Activated CD4-positive, alpha-beta T cell treated with anti-CD3 and anti-CD28 coated beads for 36 hours (primary cell): ENCODE measurements at regions of chr4 and their contacts with region 1.

Region 1: GRCh38 chr4:69838977-69839376 is 21.0 kb downstream of the SULT1E1 start:
- DNase-seq: no peak
- ATAC-seq: no peak
- H3K4me3 Mint-ChIP-seq: no peak overlapping the region
- H3K27ac Mint-ChIP-seq: no peak overlapping the region
- H3K4me1 Mint-ChIP-seq: peaks cover 4% of the 10 kb centered on the region
- H3K27me3 Mint-ChIP-seq: no peaks in the 10 kb centered on the region

Region 2: DNA sequence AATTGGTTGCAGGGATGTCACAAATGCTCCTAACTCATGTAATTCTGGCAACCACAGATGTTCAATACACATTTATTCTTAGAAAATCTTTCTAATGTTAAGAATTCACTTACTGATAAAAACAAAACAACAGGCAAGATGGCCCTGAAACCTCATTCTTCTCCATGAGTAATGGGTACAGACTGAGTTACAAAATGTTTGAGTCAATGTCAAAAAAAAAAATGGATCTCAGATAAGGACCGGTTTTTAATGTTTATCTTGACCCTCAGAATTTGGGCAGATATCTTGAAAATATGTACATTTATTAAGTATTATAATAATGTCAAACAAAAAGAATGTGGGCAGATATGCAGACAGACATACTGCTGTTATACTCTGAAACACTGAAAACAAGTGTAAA is 22.8 kb after region 1 on chr4:
- CTCF ChIA-PET with region 1: no interaction called
- POLR2A ChIA-PET with region 1: no interaction called
- intact Hi-C with region 1: loop called in 1 of 2 experiments (anchors 2 kb)
- DNase-seq: no peak
- ATAC-seq: no peak
- H3K4me3 Mint-ChIP-seq: no peak overlapping the region
- H3K27ac Mint-ChIP-seq: no peak overlapping the region
- H3K4me1 Mint-ChIP-seq: no peaks in the 10 kb centered on the region
- H3K27me3 Mint-ChIP-seq: no peaks in the 10 kb centered on the region